ENCODE measurements at regions of chr5 and their contacts with region 1.

Region 1: GRCh38 chr5:95927927-95928723 is 33.5 kb downstream of the ELL2 start:
- DNase-seq: peak; percentile 91
- ATAC-seq: peak; percentile 61
- H3K4me3 ChIP-seq: peak overlapping the region; percentile 22
- H3K27ac ChIP-seq: peak overlapping the region; percentile 91
- H3K4me1 ChIP-seq: peaks cover 65% of the 10 kb centered on the region
- H3K27me3 ChIP-seq: no peaks in the 10 kb centered on the region
- CTCF ChIP-seq: no peak
- EP300 ChIP-seq: peak; percentile 95 to 97
- POLR2A ChIP-seq: no peak
- RAD21 ChIP-seq: 0 out of 2 replicates have a peak, but pooled peaks have one; percentile 12

Region 2: GRCh38 chr5:95870105-95870672 is 57.9 kb before region 1 on chr5:
- CTCF ChIA-PET with region 1: interaction called, 19 read pairs
- POLR2A ChIA-PET with region 1: interaction called, 14 read pairs
- RAD21 ChIA-PET with region 1: interaction called, 42 read pairs
- SMC1A ChIA-PET with region 1: interaction called, 62 read pairs
- in situ Hi-C with region 1: no loop called
- intact Hi-C with region 1: loop called (anchors 2 kb)
- DNase-seq: peak; percentile 65
- ATAC-seq: peak; percentile 84
- H3K4me3 ChIP-seq: peak overlapping the region; percentile 54; the same call in 1 of the 2 replicates
- H3K27ac ChIP-seq: peak overlapping the region; percentile 82
- H3K4me1 ChIP-seq: peaks cover 24% of the 10 kb centered on the region
- H3K27me3 ChIP-seq: no peaks in the 10 kb centered on the region
- CTCF ChIP-seq: no peak
- EP300 ChIP-seq: no peak; a peak in 1 of 4 replicates
- POLR2A ChIP-seq: 0 out of 2 replicates have a peak, but pooled peaks have one; percentile 32
- RAD21 ChIP-seq: no peak

Region 3: DNA sequence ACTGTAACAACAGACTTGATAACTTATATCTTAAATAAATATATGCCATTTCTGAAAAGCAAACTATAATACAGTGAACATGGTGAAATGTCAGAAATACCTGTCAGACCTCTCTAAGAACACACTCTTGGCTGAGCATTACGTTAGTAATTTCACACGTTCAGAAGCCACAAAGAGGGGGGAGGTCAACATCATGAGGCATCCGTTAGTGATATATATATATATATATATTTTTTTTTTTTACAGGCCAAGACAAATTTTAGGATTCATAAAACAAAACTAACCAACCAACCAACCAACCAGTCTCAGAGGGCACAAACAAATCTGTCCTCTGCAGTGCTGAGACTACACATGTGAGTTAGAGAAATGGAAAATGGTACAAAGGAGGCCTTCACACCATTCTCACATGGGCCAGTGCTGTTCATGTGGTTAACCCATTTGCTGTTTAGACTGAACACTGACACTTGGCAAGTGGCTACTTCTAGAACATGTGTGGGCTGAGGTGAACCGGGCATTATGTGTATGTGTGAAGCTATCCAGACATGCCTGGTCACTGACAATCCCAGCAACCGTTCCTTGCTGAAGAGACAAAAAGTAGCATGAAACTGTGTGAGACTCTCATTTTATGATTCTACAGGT is 20.9 kb before region 1 on chr5:
- CTCF ChIA-PET with region 1: interaction called, 9 read pairs
- POLR2A ChIA-PET with region 1: interaction called, 14 read pairs
- RAD21 ChIA-PET with region 1: interaction called, 33 read pairs
- SMC1A ChIA-PET with region 1: interaction called, 23 read pairs
- in situ Hi-C with region 1: no loop called
- intact Hi-C with region 1: no loop called
- DNase-seq: no peak
- ATAC-seq: peak; percentile 76
- H3K4me3 ChIP-seq: no peak overlapping the region
- H3K27ac ChIP-seq: peak overlapping the region; percentile 11; the same call in 1 of the 2 replicates
- H3K4me1 ChIP-seq: peaks cover 11% of the 10 kb centered on the region
- H3K27me3 ChIP-seq: no peaks in the 10 kb centered on the region
- CTCF ChIP-seq: no peak
- EP300 ChIP-seq: no peak
- POLR2A ChIP-seq: no peak
- RAD21 ChIP-seq: no peak

Region 4: DNA sequence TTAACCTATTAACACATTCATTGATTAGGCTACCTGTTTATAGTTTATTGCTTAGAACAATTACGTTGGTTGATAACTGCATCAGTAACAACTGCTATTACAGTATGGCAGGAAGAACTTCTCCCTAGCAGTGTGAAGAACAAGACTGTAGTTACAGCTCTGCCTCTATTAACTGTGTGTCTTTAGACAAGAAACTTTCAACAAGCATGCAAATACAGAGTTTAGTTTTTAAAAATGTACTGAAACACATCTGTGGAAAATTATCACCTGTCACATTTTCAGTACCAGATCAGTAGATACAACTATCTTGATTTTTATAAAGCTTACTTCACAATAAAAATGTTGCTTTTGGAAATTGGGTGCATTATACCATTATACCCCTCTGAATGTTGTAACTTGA is 11.3 kb after region 1 on chr5:
- CTCF ChIA-PET with region 1: interaction called, 10 read pairs
- POLR2A ChIA-PET with region 1: interaction called, 14 read pairs
- RAD21 ChIA-PET with region 1: interaction called, 21 read pairs
- SMC1A ChIA-PET with region 1: interaction called, 37 read pairs
- in situ Hi-C with region 1: no loop called
- intact Hi-C with region 1: no loop called
- DNase-seq: no peak
- ATAC-seq: peak; percentile 53
- H3K4me3 ChIP-seq: 0 out of 2 replicates have a peak overlapping the region, but pooled peaks have one; percentile 0
- H3K27ac ChIP-seq: peak overlapping the region; percentile 62
- H3K4me1 ChIP-seq: peaks cover 26% of the 10 kb centered on the region
- H3K27me3 ChIP-seq: no peaks in the 10 kb centered on the region
- CTCF ChIP-seq: no peak
- EP300 ChIP-seq: no peak
- POLR2A ChIP-seq: no peak
- RAD21 ChIP-seq: no peak

Region 5: GRCh38 chr5:95956021-95956899 is 28.1 kb after region 1 on chr5:
- CTCF ChIA-PET with region 1: interaction called, 54 read pairs
- POLR2A ChIA-PET with region 1: interaction called, 18 read pairs
- RAD21 ChIA-PET with region 1: interaction called, 42 read pairs
- SMC1A ChIA-PET with region 1: interaction called, 62 read pairs
- in situ Hi-C with region 1: no loop called
- intact Hi-C with region 1: loop called (anchors 1 kb)
- DNase-seq: no peak
- ATAC-seq: peak; percentile 10; the same call in 1 of the 3 replicates
- H3K4me3 ChIP-seq: peak overlapping the region; percentile 46; the same call in 1 of the 2 replicates
- H3K27ac ChIP-seq: peak overlapping the region; percentile 6; the same call in 1 of the 2 replicates
- H3K4me1 ChIP-seq: 0 out of 2 replicates have a peak, but pooled peaks cover 3% of the 10 kb centered on the region
- H3K27me3 ChIP-seq: no peaks in the 10 kb centered on the region
- CTCF ChIP-seq: no peak
- EP300 ChIP-seq: no peak
- POLR2A ChIP-seq: no peak
- RAD21 ChIP-seq: no peak

Region 6: DNA sequence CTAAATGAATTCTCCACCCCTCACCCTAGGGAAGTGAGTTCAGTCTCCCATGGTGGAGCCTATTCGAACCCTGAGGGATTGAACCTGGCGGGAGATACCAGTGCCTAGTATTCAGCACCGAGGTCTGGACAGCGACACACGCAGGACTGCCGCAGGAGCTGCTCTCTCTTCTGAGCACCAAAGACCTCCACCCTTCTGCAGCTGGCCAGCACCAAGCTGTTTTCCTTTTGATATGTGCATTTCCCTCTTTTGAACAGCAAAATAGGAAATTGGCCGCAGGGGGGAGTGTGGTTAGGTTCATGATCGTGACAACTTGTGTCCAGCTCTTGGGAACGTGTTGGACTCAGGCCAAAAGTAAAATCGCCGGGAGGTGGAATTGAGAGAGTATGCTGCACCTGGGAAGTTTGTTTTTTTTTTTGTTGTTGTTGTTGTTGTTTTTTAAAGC is 506.1 kb after region 1 on chr5:
- CTCF ChIA-PET with region 1: no interaction called
- POLR2A ChIA-PET with region 1: no interaction called
- RAD21 ChIA-PET with region 1: no interaction called
- SMC1A ChIA-PET with region 1: no interaction called
- in situ Hi-C with region 1: no loop called
- intact Hi-C with region 1: loop called (anchors 10 kb)
- DNase-seq: no peak
- ATAC-seq: peak; percentile 84
- H3K4me3 ChIP-seq: no peak overlapping the region
- H3K27ac ChIP-seq: no peak overlapping the region
- H3K4me1 ChIP-seq: peaks cover 8% of the 10 kb centered on the region; the same call in 1 of the 2 replicates
- H3K27me3 ChIP-seq: peaks cover 0 to 10% of the 10 kb centered on the region in 2 experiments; a peak in 2 of 4 replicates
- CTCF ChIP-seq: no peak
- EP300 ChIP-seq: no peak
- POLR2A ChIP-seq: no peak
- RAD21 ChIP-seq: no peak